ENCODE measurements at regions of chr12 and their contacts with region 1.

Region 1: GRCh38 chr12:15575671-15576541 is 213.3 kb downstream of the EPS8 start:
- DNase-seq: no peak
- H3K4me3 Mint-ChIP-seq: peak overlapping the region; percentile 12
- H3K27ac Mint-ChIP-seq: peak overlapping the region; percentile 88
- H3K4me1 Mint-ChIP-seq: peaks cover 64% of the 10 kb centered on the region
- H3K27me3 Mint-ChIP-seq: no peaks in the 10 kb centered on the region

Region 2: GRCh38 chr12:15546102-15546701 is 29.7 kb before region 1 on chr12:
- intact Hi-C with region 1: loop called (anchors 1 kb)
- DNase-seq: no peak
- H3K4me3 Mint-ChIP-seq: peak overlapping the region; percentile 39
- H3K27ac Mint-ChIP-seq: peak overlapping the region; percentile 80
- H3K4me1 Mint-ChIP-seq: peaks cover 44% of the 10 kb centered on the region
- H3K27me3 Mint-ChIP-seq: no peaks in the 10 kb centered on the region

Region 3: DNA sequence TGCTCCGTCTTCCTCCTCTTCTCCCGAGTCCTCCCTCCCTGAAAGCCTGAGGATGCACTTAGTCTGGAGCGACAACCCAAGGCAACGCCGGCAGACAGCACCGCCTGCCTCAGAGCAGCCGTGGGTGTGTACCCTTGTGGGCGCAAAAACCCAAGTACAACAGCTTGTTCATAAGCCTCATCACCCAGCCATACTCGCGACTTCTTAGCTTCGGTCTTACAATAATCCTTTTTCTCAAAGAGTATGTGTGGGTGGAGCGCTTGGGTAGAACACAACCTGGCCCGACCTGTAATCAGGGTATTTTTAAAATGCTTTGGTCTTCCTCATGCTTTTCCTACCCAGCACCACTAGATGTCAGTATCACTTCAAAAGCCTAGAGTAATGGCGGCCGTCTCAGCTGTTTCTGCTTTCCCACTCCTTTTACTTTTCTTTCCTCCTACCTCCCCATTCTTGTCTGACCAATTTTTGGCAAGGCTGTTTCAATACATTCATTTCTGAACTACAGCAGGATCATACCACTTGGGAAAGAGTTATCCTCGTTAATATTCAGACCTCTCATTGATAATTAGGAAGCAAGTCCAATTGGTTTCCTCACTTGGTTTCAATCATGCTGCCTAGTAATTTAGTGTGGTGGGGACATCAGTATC is 14.4 kb after region 1 on chr12:
- intact Hi-C with region 1: no loop called
- DNase-seq: peak; percentile 42
- H3K4me3 Mint-ChIP-seq: peak overlapping the region; percentile 72
- H3K27ac Mint-ChIP-seq: no peak overlapping the region
- H3K4me1 Mint-ChIP-seq: peaks cover 9% of the 10 kb centered on the region
- H3K27me3 Mint-ChIP-seq: no peaks in the 10 kb centered on the region

Region 4: GRCh38 chr12:15601210-15601800 is 25.4 kb after region 1 on chr12:
- intact Hi-C with region 1: no loop called
- DNase-seq: no peak
- H3K4me3 Mint-ChIP-seq: no peak overlapping the region
- H3K27ac Mint-ChIP-seq: no peak overlapping the region
- H3K4me1 Mint-ChIP-seq: no peaks in the 10 kb centered on the region
- H3K27me3 Mint-ChIP-seq: peaks cover 2% of the 10 kb centered on the region

Region 5: DNA sequence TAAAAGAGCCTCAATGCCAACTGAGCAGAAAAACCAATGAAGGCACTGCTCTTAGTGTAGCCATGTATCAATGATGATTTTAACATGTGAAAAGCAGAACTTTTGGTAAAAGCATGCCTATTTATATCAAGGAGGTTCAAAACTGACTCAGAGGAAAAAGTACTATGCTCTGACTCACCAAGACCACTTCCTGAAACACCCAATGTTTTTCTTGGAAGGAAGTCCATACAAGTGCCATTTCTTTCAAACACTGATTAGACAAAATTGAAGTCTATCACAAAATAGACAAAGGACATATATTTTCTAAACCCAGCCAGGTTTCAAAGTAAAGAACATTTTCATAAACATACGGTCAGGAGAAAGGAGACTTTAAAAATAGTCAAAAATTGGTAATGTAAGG is 124.7 kb after region 1 on chr12:
- intact Hi-C with region 1: loop called (anchors 2 kb)
- DNase-seq: peak; percentile 14
- H3K4me3 Mint-ChIP-seq: peak overlapping the region; percentile 75
- H3K27ac Mint-ChIP-seq: peak overlapping the region; percentile 88
- H3K4me1 Mint-ChIP-seq: peaks cover 40% of the 10 kb centered on the region
- H3K27me3 Mint-ChIP-seq: no peaks in the 10 kb centered on the region